ENCODE measurements at regions of chr10 and their contacts with region 1.

Region 1: GRCh38 chr10:95430231-95430951 is 130.8 kb downstream of the SORBS1 start:
- DNase-seq: no peak
- ATAC-seq: peak; percentile 78

Region 2: DNA sequence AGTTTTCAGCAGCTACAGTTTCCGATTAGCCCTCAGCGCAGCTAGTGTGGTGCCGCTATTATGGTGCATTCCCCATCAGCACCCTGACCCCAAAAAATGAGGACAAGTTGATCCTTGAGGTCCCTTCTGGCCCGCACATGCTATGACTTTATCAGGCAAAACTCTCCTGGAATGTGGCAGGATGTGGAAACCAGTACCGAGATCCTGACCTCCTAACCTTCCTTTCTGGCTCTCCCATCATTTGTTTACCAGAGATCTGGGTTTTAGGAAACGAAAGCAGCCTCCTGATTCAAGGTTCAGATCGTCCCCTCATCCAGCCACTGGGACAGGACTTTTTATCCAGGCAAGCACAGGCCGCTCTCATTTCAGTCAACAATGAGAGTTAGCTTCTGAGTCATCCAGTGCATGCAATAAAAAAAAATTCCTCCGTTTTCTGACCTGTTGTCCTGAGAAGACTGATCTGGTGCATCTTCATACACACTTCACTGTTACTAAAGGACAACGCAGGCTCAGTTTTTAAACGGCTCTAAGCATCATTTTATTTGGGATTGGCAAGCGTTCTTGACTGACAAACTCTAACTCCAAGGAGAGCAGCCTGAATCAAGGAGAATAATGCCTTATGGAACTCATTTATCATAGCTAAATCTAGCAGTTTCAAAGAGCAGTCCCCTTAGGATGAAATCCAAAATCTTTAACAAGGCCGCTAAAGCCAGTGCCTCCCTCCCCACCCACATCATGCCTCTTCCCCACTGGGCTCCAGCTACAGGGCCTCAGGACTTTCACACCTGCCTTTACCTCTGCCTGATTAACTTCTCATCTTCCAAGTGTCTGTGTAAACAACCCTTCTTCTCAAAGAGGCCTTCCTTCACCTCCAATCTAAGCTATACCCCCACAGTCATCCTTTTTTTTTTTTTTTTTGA is 156.7 kb before region 1 on chr10:
- intact Hi-C with region 1: no loop called
- DNase-seq: no peak
- ATAC-seq: peak; percentile 63

Region 3: GRCh38 chr10:95559471-95559870 is 129.1 kb after region 1 on chr10:
- intact Hi-C with region 1: loop called (anchors 5 kb)
- DNase-seq: no peak
- ATAC-seq: no peak

Region 4: DNA sequence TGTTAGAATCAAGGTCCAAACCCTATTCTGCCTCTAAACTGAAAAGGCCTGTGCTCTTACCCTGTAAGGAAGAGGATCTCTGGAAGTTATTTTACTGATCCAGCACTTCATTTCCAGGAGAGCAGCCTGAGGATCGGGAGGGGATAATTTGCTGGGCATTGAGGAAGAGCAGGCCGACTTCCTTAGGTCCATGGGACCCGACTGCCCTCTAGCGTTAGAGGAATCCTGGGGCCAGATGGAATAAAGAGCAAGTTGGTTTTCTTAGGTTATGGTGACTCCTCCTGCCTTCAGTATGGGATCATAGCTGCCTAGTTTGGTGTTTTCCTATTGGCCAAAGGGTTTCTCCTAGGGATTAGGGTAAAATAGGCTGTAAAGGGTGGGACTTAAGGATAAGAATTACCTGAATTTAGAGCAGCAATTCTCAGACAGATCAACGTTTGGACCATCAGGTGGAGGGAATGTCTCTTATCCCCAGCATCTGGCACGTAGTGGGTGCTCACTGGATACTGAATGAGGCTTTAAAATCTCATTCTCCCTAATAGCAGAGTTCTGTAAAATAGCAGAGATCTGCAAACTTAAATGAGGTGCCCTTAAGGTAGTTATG is 170.8 kb after region 1 on chr10:
- intact Hi-C with region 1: loop called (anchors 2 kb)
- DNase-seq: peak; percentile 81
- ATAC-seq: peak; percentile 93

Region 5: DNA sequence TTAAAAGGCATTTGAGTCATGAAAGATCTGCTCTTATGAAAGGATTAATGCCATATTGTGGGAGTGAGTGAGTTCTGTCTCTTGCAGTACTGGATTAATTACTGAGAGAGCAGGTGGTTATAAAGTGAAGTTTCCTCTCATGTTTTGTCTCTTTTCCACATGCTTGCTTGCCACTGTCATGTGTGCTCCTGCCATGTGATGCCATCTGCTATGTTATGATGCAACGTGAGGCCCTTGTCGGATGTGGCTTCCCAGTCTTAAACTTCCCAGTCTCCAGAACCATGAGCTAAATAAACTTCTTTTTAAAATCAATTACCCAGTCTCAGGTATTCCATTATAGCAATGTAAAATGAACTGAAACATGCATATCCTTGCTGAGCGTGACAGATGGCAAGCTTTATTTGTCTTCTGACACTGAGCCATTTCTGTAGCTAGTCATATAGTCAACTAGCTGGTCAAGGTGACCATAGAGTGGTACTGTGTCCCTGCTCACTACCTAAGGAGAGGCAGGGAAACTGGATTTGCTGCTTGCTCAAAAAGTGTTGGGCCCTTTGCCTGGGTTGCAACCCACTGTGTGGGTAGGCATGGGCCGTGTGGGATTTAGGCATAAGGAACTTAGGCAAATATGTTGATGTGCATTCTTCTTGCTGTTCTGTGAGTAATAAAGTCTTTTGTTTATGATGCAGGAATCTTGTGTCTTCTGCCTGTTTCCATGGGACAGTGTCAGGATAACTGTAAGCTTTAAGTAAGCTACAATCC is 286.3 kb after region 1 on chr10:
- intact Hi-C with region 1: no loop called
- DNase-seq: no peak
- ATAC-seq: no peak

Region 6: GRCh38 chr10:96740579-96741281 is 1310.3 kb after region 1 on chr10:
- intact Hi-C with region 1: no loop called
- DNase-seq: peak; percentile 80
- ATAC-seq: peak; percentile 80

Measured in Right ventricle myocardium superior (tissue), 1 donor.